ENCODE measurements at regions of chr5 and their contacts with region 1.

Region 1: GRCh38 chr5:38809388-38810359 is 36.1 kb upstream of the OSMR start:
- DNase-seq: peak; percentile 67 to 72
- ATAC-seq: peak; percentile 78 to 91
- H3K4me3 ChIP-seq: no peak overlapping the region
- H3K27ac ChIP-seq: peak overlapping the region; percentile 36 to 47 (median 44)
- H3K4me1 ChIP-seq: peaks cover 9 to 22% of the 10 kb centered on the region in 2 donors
- H3K27me3 ChIP-seq: no peaks in the 10 kb centered on the region
- CTCF ChIP-seq: peak; percentile 80 to 89 (median 81)
- POLR2A ChIP-seq: no peak

Region 2: GRCh38 chr5:38382898-38383297 is 426.8 kb before region 1 on chr5:
- in situ Hi-C with region 1: no loop called
- intact Hi-C with region 1: loop called (anchors 1 kb)
- DNase-seq: peak; percentile 11 to 45
- ATAC-seq: peak; percentile 51 to 88
- H3K4me3 ChIP-seq: no peak overlapping the region
- H3K27ac ChIP-seq: no peak overlapping the region
- H3K4me1 ChIP-seq: no peaks in the 10 kb centered on the region
- H3K27me3 ChIP-seq: peaks cover 0 to 4% (median 0%) of the 10 kb centered on the region in 3 donors
- CTCF ChIP-seq: peak; percentile 34 to 70 (median 51)
- POLR2A ChIP-seq: no peak

Region 3: DNA sequence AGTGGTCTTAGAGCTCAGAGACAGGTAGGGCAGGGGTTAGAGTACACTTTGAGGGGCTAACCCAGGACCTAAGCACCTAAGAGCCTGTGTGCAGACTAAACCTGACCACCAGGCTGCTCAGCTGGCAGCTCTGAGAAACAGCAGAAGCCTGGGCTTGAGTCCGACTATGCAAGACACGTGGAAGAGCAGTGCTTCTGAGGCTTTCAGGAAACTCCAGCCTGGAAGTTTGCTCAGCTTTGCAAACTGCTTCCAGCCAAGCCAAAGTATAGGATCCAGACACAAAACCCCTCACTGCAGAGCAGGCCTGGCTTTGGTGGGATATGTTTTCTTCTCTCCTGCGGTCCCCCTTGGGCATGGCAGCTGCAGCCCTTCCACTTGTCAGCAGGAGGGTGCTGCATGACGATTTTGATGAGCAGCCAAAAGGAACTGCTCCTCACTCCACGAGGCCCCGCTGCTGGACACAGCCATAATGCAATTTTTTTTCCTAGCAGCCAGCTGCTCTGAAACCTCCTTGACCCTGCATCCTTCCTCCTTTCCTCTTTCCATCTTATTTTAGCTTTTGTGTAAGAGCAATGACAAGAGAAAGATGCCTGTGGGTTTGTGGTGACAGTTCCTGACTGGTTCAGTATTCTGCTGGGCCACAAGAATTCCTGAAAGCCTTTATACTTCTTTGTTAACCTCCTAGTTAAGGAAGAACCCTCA is 376.4 kb before region 1 on chr5:
- in situ Hi-C with region 1: loop called in 3 of 4 experiments (anchors 5 to 10 kb)
- intact Hi-C with region 1: no loop called
- DNase-seq: no peak
- ATAC-seq: peak; percentile 45 to 50
- H3K4me3 ChIP-seq: no peak overlapping the region
- H3K27ac ChIP-seq: peak overlapping the region in 2 of 4 donors; percentile 5 to 16
- H3K4me1 ChIP-seq: peaks cover 7% of the 10 kb centered on the region in 2 donors
- H3K27me3 ChIP-seq: no peaks in the 10 kb centered on the region
- CTCF ChIP-seq: no peak
- POLR2A ChIP-seq: no peak

Region 4: DNA sequence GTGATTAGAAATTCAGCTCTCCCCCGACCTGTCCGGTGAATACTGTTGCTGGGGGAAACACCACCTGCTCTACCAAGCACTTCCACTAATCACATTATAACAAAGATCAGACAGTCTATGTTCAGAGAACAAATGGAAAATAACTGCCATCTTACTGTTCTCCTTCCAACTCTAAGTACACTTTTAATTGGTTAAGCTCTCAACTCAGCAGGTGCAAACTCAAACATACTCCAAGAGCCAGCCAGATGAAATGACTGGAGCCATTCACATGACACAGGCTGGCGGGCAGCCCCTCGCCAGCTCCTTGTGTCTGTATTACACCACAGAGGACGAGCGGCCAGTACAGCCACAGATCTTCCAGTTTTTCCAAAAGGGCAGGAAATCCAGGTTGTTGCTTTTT is 269.4 kb before region 1 on chr5:
- in situ Hi-C with region 1: loop called in 1 of 4 experiments (anchors 10 kb)
- intact Hi-C with region 1: no loop called
- DNase-seq: peak; percentile 81 to 90
- ATAC-seq: peak; percentile 87 to 94
- H3K4me3 ChIP-seq: peak overlapping the region; percentile 5 to 19 (median 11)
- H3K27ac ChIP-seq: peak overlapping the region; percentile 79 to 87 (median 85)
- H3K4me1 ChIP-seq: peaks cover 91 to 94% of the 10 kb centered on the region in 2 donors
- H3K27me3 ChIP-seq: no peaks in the 10 kb centered on the region
- CTCF ChIP-seq: no peak
- POLR2A ChIP-seq: peak; percentile 24 to 45

Region 5: GRCh38 chr5:38672059-38672788 is 137.4 kb before region 1 on chr5:
- in situ Hi-C with region 1: loop called in 1 of 4 experiments (anchors 10 kb)
- intact Hi-C with region 1: loop called (anchors 5 kb)
- DNase-seq: no peak
- ATAC-seq: no peak
- H3K4me3 ChIP-seq: no peak overlapping the region
- H3K27ac ChIP-seq: no peak overlapping the region
- H3K4me1 ChIP-seq: peaks cover 0 to 5% of the 10 kb centered on the region in 2 donors
- H3K27me3 ChIP-seq: no peaks in the 10 kb centered on the region
- CTCF ChIP-seq: no peak
- POLR2A ChIP-seq: no peak

Region 6: GRCh38 chr5:38793099-38793498 is 16.6 kb before region 1 on chr5:
- in situ Hi-C with region 1: no loop called
- intact Hi-C with region 1: no loop called
- DNase-seq: no peak
- ATAC-seq: no peak
- H3K4me3 ChIP-seq: no peak overlapping the region
- H3K27ac ChIP-seq: no peak overlapping the region
- H3K4me1 ChIP-seq: peaks cover 15 to 20% of the 10 kb centered on the region in 2 donors
- H3K27me3 ChIP-seq: no peaks in the 10 kb centered on the region
- CTCF ChIP-seq: no peak
- POLR2A ChIP-seq: no peak

Region 7: DNA sequence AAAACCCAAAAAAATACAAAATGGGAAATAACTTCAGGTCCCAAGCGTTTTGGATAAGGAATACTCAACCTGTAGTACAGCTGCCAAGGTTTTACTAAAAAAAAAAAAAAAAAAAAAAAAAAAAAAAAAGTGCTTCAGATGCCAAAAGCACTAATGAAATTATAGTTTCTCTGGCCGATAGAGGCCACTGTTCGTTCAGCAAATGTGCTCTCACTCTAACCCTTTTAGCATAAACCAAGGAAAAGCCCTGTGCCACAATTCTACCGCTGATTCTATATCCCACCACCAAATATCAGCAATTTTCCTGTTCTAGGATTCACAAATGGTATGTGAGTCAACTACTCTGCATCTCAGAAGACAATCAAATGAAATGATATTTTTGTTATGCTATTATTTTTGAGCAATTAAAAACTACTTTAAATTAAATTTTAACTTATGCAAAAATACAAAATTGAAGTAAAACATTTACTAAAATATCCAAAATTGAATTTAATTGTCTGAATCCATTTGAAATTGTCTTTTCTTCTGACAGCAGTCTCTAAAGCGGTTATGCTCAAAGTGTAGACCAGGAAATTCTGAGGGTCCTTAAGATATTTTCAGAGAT is 184.8 kb after region 1 on chr5:
- in situ Hi-C with region 1: no loop called
- intact Hi-C with region 1: no loop called
- DNase-seq: peak in 1 of 2 donors; percentile 24
- ATAC-seq: peak; percentile 81 to 84
- H3K4me3 ChIP-seq: no peak overlapping the region
- H3K27ac ChIP-seq: no peak overlapping the region
- H3K4me1 ChIP-seq: peaks cover 7 to 15% of the 10 kb centered on the region in 2 donors
- H3K27me3 ChIP-seq: no peaks in the 10 kb centered on the region
- CTCF ChIP-seq: peak in 4 of 5 experiments; percentile 31 to 55 (median 42)
- POLR2A ChIP-seq: no peak